ENCODE measurements at regions of chr16 and their contacts with region 1.

Region 1: DNA sequence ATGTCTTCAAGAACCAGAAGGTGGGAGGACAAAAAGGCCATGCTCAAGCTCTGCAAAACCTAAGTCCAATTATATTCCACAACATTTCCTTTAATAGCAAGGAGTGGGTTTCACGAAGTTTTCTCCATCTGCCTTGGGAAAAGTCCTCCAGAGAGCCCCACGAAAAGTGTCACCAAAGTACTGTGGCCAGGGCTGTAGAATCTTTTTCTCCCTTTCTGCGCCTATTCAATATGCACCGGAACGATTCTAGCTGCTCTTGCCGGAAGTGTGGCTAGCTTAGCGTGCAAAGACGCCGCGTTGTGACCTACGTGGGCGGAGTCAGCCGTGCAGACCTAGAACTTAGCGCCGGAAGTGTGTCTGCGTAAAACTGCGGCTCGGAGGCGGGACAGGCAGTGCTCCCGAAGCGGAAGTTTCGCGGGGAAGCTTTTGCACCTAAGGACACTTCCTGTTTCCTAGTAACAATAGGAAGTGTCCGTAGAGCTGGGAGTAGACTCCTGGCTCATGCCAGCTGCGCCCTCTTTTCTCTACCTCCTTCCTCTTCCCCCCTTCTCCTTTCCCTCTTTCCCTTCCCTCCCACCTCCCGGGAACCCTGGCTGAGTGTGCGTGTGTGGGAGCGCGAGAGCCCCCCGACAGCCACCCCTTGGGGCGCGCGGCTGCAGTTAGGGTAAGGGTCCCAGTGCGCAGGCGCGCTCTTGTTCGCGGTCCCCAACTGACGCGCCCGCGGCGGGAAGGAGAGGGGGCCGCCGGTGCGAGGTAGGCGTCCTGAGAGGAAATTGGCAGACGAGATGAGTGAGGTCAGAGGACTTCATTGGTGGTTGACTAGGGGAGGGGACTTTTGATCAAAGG is at the starts of genes ZNF646 and ZNF668:
- DNase-seq: peak; percentile 98
- H3K4me3 ChIP-seq: peak within 1 kb of the TSS; percentile 75 to 100 (median 98)
- H3K27ac ChIP-seq: peak within 1 kb of the TSS; percentile 73
- H3K4me1 ChIP-seq: peaks cover 14% of the 10 kb centered on the region
- H3K27me3 ChIP-seq: no peaks in the 10 kb centered on the region
- CTCF ChIP-seq: no peak
- total RNA-seq, gene ZNF646: 15.4 to 15.5 TPM
- total RNA-seq, gene ZNF668: 13.2 to 14.7 TPM

Region 2: DNA sequence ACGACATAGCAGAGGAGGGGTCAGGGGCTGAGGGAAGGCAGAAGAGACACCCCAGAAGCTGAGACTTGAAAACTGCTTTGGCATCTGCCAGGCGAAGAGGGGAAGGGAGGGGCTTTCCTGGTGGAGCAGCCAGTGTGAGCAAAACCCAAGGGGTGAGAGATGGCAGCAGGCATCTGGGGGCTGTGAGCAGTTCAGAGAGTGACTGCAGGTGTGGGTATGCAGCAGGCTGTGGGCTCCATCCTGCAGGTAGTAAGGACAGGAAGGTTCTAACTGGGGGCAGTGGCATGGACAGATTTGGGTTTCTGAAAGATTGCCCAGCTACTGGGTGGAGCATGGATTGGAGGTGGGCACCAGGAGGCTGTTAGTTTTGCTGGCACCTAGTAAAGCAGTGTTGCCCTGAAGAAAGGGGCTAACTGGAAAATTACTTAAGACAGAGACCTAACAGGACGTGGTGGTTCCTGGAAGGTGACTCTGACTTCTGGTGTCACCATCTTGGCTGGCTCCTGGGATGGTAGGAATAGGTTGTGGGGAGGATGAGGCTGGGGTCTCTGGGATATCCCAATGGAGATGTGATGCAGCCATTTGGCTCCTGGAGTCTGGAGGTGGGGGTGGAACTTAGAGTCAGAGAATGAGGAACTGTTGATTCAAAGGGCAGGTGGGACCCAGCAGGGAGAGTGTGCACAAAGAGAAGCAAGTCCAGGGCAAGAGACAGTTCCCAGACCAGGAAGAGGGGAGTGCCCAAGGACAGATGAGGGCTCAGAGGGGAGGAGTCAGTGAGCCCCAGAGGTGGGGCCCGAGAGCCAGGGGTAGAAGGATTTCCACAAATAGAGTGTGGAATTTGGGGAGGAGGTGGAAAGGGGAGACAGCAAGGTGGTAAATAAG is 191.5 kb before region 1 on chr16:
- CTCF ChIA-PET with region 1: no interaction called
- dilution Hi-C with region 1: loop called (anchors 10 kb)
- in situ Hi-C with region 1: no loop called
- intact Hi-C with region 1: no loop called
- DNase-seq: no peak
- H3K4me3 ChIP-seq: no peak overlapping the region
- H3K27ac ChIP-seq: no peak overlapping the region
- H3K4me1 ChIP-seq: no peaks in the 10 kb centered on the region
- H3K27me3 ChIP-seq: no peaks in the 10 kb centered on the region
- CTCF ChIP-seq: no peak

Region 3: DNA sequence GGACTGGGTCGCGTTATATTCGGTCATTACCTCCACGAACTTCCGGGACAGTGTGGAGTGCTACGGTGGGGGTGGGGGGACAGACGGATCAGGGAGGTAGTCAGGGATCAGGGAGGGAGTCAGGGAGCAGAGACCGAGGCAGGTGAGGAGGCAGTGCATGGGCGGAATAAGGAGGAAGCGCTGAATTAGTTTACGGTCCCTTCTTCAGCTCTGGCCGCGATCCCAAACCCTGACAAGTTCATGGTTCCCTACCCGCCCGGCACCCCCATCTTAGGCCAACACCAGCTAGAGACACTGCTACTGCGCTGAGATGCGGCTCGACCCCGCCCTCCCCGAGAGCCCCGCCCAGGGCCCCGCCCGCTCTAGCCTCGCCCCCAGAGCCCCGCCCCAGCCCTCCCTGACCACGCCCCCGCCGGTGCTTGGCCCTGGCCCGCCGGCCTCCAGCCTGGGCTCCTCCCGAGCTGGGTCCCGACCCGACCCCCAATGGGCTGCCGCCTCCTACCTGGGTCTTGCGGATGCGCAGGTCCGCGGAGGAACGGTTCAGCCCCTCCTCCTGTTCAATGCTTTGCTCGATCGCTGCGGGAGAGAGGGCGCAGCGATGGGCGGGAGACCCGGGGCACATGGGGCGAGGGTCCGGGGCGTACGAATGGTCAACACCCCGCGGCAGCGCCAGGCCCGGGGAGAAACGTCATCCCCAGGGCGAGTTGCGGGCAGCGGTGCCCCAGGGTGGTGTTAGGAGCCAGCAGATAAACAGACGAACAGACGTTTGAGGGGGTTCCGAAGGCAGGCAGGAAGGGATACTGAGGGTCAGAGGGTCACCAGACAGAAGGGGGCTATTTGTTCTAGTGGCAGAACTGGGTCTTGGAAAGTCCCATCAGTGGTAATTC is 76.9 kb before region 1 on chr16:
- CTCF ChIA-PET with region 1: no interaction called
- dilution Hi-C with region 1: loop called (anchors 5 kb)
- in situ Hi-C with region 1: loop called (anchors 10 kb)
- intact Hi-C with region 1: loop called (anchors 2 kb)
- DNase-seq: peak; percentile 72
- H3K4me3 ChIP-seq: peak overlapping the region; percentile 51 to 68 (median 60)
- H3K27ac ChIP-seq: peak overlapping the region; percentile 85
- H3K4me1 ChIP-seq: peaks cover 36% of the 10 kb centered on the region
- H3K27me3 ChIP-seq: no peaks in the 10 kb centered on the region
- CTCF ChIP-seq: no peak

Region 4: DNA sequence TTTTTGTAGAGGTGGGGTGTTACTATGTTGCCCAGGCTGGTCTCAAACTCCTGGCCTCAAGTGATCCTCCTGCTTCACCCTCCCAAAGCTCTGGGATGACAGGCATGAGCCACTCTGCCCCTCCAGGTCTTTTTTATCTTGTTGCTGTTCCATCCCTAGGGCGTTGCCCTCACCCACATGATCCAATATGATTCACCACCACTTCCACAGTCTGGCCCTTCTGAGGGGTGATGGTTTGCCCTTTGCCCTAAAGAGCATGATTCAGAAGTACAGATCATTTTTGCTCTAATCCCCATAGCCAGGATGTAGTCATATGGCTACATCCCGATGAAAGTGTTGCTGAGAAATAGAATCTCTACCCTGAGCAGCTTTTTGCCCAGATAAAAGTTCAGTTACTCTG is 22.1 kb before region 1 on chr16:
- CTCF ChIA-PET with region 1: no interaction called
- dilution Hi-C with region 1: no loop called
- in situ Hi-C with region 1: no loop called
- intact Hi-C with region 1: loop called (anchors 1 kb)
- DNase-seq: peak; percentile 96
- H3K4me3 ChIP-seq: no peak overlapping the region
- H3K27ac ChIP-seq: peak overlapping the region; percentile 42
- H3K4me1 ChIP-seq: peaks cover 6% of the 10 kb centered on the region
- H3K27me3 ChIP-seq: no peaks in the 10 kb centered on the region
- CTCF ChIP-seq: no peak

Region 5: GRCh38 chr16:31142109-31143010 is 68.2 kb after region 1 on chr16:
- CTCF ChIA-PET with region 1: no interaction called
- dilution Hi-C with region 1: no loop called
- in situ Hi-C with region 1: no loop called
- intact Hi-C with region 1: loop called (anchors 1 kb)
- DNase-seq: peak; percentile 98
- H3K4me3 ChIP-seq: peak overlapping the region; percentile 15 to 40 (median 37)
- H3K27ac ChIP-seq: peak overlapping the region; percentile 55
- H3K4me1 ChIP-seq: peaks cover 38% of the 10 kb centered on the region
- H3K27me3 ChIP-seq: no peaks in the 10 kb centered on the region
- CTCF ChIP-seq: peak; percentile 78 to 96

Region 6: GRCh38 chr16:31301708-31302400 is 227.7 kb after region 1 on chr16:
- CTCF ChIA-PET with region 1: no interaction called
- dilution Hi-C with region 1: no loop called
- in situ Hi-C with region 1: no loop called
- intact Hi-C with region 1: no loop called
- DNase-seq: peak; percentile 26
- H3K4me3 ChIP-seq: no peak overlapping the region
- H3K27ac ChIP-seq: no peak overlapping the region
- H3K4me1 ChIP-seq: no peaks in the 10 kb centered on the region
- H3K27me3 ChIP-seq: no peaks in the 10 kb centered on the region
- CTCF ChIP-seq: peak in 1 of 2 donors; percentile 5

Region 7: DNA sequence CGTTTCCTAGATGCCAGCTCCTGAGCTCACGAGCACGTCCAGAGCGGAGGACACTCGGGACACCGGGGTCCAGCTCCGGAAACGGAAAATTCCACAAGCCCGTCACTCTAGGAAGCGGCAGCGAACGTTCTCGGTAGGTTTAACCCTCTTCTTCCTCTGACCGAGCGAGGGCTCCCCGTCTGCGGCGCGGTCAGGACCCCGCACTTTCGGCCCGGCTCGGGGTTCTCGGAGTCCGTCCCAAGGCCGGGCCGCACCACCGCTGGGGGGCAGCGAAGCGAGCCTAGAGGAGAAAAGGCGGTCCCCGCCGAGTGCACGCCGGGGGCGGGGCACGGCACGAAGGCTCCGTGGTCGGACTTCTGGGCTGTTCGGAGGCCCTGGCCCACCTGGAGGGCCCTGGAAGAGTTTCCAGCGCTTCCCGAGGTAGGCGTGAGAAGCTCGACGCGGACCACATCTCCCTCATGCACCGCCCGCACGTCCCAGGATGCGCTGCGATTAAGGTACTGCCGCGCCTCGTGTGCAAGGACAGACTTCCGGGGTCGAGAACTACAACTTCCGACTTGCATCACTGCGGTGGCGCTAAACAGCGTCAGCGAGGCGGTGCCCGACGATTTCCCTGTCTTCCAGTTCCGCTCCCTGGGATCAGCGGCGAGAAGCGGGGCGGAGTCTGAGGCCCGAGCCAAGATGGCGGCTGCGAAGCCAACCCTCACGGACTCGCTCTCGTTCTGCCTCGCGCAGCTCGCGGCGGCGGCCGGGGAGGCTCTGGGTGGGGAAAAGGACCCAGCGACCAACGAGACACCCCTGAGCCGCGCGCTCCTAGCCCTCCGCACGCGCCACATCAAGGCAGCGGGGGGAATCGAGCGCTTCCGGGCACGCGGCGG is 384.9 kb after region 1 on chr16 and contains the start of gene ARMC5:
- CTCF ChIA-PET with region 1: no interaction called
- dilution Hi-C with region 1: loop called (anchors 10 kb)
- in situ Hi-C with region 1: no loop called
- intact Hi-C with region 1: no loop called
- DNase-seq: peak; percentile 97
- H3K4me3 ChIP-seq: peak within 1 kb of the TSS; percentile 79 to 93 (median 88)
- H3K27ac ChIP-seq: peak within 1 kb of the TSS; percentile 91
- H3K4me1 ChIP-seq: peaks cover 41% of the 10 kb centered on the region
- H3K27me3 ChIP-seq: no peaks in the 10 kb centered on the region
- CTCF ChIP-seq: peak; percentile 25 to 68
- total RNA-seq, gene ARMC5: 8.7 to 10.7 TPM